ENCODE measurements at regions of chr16 and their contacts with region 1.

Region 1: DNA sequence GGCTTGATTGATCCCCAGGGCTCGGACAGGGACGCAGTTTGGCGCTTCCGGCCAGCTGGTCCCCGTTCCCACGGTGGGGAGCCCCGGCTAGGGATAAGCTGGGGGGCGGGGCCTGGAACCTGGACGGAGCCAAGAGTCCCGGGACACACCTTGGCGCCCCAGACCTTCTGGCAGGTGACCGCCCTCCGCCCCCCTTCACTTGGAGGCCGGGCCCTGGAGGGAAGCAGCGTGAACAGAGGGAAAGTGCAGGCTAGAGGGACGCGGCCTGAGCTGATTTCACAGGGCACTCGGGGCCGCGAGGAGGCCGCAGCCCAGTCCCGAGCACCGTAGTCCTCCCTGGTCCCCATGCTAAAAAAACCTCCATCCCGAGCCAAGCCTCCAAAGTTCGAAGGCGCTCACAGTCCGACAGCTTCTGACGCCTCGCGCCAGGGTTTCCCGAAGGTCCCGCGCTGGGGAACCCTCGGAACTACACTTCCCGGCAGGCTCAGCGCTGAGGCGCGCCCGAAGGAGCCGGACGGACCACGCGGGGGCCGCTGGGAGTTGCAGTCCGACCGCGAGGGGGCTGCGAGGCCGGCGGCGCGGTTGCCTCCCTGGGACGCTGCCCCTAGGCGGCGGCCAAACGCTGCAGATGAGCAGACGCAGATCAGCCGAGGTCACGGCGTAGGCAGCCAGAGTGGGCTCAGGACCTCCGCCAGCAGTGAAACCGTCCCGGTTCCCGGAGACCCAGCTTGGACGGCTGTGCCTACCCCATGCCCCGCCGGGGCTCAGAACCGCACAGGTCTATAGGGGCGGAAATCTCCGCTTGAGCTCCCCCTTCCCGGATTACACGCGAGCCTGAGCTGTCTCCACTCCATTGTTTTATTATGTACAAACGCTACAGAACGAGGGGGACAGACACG is at the start of gene TBX6:
- DNase-seq: peak; percentile 23
- H3K4me3 ChIP-seq: peak within 1 kb of the TSS; percentile 48
- H3K27me3 ChIP-seq: no peaks in the 10 kb centered on the region
- CTCF ChIP-seq: peak; percentile 67
- polyA plus RNA-seq, gene TBX6: 0.04 TPM in 2 replicates

Region 2: DNA sequence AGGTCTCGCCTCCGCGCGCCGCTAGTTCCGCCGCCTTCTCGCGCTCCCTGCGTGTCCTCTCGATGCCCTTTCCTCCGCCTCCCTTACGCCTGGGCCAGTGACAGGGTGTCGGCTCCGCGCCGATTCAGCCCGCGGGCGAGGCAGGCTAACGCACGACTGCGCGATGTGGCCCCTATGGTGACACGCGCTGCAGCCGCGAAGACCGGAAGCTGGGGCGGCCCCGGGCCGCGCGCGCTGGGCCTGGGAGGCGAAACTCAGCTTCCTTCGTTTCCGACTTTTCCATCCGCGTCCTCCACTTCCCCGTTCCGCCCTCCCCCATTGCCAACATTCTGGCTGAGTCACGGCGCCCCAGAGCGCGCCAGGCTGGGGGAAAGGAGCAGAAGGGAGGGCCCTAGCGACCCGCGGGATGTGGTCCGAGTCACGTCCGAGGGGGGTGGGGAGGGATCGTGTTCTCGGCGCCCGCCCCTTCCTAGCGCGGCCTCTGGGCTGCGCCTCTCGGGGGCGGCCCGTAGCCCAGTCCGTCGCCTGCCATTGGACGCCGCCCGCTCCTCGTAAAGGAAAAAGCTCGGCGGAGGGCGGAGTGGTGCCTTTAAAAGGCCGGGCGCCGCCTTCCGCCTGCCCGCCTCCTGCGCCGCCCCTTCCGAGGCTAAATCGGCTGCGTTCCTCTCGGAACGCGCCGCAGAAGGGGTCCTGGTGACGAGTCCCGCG is 26.4 kb before region 1 on chr16 and contains the start of gene ALDOA:
- CTCF ChIA-PET with region 1: interaction called, 14 read pairs
- POLR2A ChIA-PET with region 1: interaction called, 4 read pairs
- DNase-seq: peak; percentile 92
- H3K4me3 ChIP-seq: peak within 1 kb of the TSS; percentile 99
- H3K27me3 ChIP-seq: no peaks in the 10 kb centered on the region
- CTCF ChIP-seq: no peak
- polyA plus RNA-seq, gene ALDOA: 754 and 1,788 TPM in 2 replicates

Region 3: GRCh38 chr16:30075507-30076275 is 16.0 kb before region 1 on chr16 and contains the start of gene PPP4C:
- CTCF ChIA-PET with region 1: interaction called, 28 read pairs
- POLR2A ChIA-PET with region 1: interaction called, 4 read pairs
- DNase-seq: no peak
- H3K4me3 ChIP-seq: peak within 1 kb of the TSS; percentile 60
- H3K27me3 ChIP-seq: no peaks in the 10 kb centered on the region
- CTCF ChIP-seq: peak; percentile 18; the same call in 1 of the 2 replicates
- polyA plus RNA-seq, gene PPP4C: 143 and 209 TPM in 2 replicates

Region 4: GRCh38 chr16:30104494-30104968 is 12.8 kb after region 1 on chr16:
- CTCF ChIA-PET with region 1: interaction called, 17 read pairs
- POLR2A ChIA-PET with region 1: no interaction called
- DNase-seq: no peak
- H3K4me3 ChIP-seq: no peak overlapping the region
- H3K27me3 ChIP-seq: no peaks in the 10 kb centered on the region
- CTCF ChIP-seq: no peak

Region 5: GRCh38 chr16:30112197-30113030 is 20.7 kb after region 1 on chr16:
- CTCF ChIA-PET with region 1: interaction called, 17 read pairs
- POLR2A ChIA-PET with region 1: no interaction called
- DNase-seq: no peak
- H3K4me3 ChIP-seq: no peak overlapping the region
- H3K27me3 ChIP-seq: no peaks in the 10 kb centered on the region
- CTCF ChIP-seq: peak; percentile 74

Region 6: GRCh38 chr16:30335598-30336474 is 244.1 kb after region 1 on chr16:
- CTCF ChIA-PET with region 1: no interaction called
- POLR2A ChIA-PET with region 1: no interaction called
- DNase-seq: no peak
- H3K4me3 ChIP-seq: peak overlapping the region; percentile 39
- H3K27me3 ChIP-seq: no peaks in the 10 kb centered on the region
- CTCF ChIP-seq: no peak

Region 7: GRCh38 chr16:30409125-30410060 is 317.7 kb after region 1 on chr16:
- CTCF ChIA-PET with region 1: interaction called, 10 read pairs
- POLR2A ChIA-PET with region 1: no interaction called
- DNase-seq: peak; percentile 17
- H3K4me3 ChIP-seq: no peak overlapping the region
- H3K27me3 ChIP-seq: no peaks in the 10 kb centered on the region
- CTCF ChIP-seq: peak; percentile 98

Measured in BJ (cell line).